Posterior vena cava (tissue), 2 donors: ENCODE measurements at regions of chr18 and their contacts with region 1.

Region 1: GRCh38 chr18:45793306-45793965 is 32.0 kb upstream of the SIGLEC15 start:
- DNase-seq: no peak

Region 2: GRCh38 chr18:45817543-45817942 is 24.1 kb after region 1 on chr18:
- intact Hi-C with region 1: no loop called
- DNase-seq: no peak

Region 3: GRCh38 chr18:45829855-45830254 is 36.4 kb after region 1 on chr18:
- intact Hi-C with region 1: loop called in 1 of 2 experiments (anchors 2 kb)
- DNase-seq: no peak